Left cardiac atrium (tissue), 4 donors: ENCODE measurements at regions of chr1 and their contacts with region 1.

Region 1: GRCh38 chr1:28602536-28603439 is 10.7 kb downstream of the RAB42 start:
- DNase-seq: peak; percentile 58
- ATAC-seq: peak; percentile 57 to 75

Region 2: GRCh38 chr1:28359592-28360239 is 243.1 kb before region 1 on chr1:
- intact Hi-C with region 1: loop called in 1 of 2 experiments (anchors 10 kb)
- DNase-seq: peak; percentile 80
- ATAC-seq: peak in 1 of 2 donors; percentile 45

Region 3: DNA sequence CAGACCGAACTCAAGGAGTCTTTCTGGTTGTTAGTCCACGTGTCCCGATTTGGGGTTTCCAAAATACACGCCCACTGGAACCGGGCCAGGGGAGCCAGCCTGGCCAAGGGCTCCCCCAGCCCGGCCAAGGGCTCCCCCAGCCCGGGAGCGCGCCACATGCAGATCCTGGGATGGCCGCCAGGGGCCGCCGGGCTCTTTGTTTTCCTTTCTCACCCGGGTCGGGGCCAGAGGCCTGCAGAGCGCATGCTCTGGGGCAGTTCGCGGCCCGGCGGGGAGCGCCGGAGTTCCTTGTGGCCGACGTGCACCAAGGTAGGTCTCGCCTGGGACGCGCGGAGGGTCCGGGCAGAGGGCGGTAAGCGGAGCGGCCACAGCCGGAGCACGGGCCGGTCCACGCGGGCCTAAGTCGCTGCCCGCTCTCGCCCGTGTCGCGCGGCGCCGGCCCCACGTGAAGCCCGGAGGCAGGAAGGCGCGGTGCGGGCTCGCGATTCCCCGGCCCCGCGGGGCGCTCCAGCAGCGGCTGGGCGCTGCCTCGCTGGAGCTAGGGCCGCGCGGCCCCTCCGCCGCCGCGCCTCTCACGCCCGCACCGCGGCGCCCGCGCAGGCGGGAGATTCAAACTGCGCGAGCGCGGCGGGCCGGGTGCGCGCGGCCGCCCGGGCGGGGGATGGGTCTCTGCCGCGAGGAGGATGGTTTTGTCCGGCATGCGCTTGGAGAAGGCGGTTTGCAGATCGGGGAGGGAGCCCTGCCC is 84.6 kb before region 1 on chr1:
- intact Hi-C with region 1: loop called (anchors 2 to 5 kb)
- DNase-seq: peak; percentile 94
- ATAC-seq: peak; percentile 91 to 95